MCF 10A (cell line): ENCODE measurements at regions of chr11 and their contacts with region 1.

Region 1: GRCh38 chr11:7571640-7572000 is 57.8 kb downstream of the PPFIBP2 start:
- DNase-seq: peak; percentile 83
- H3K4me3 Mint-ChIP-seq: no peak overlapping the region
- H3K27ac Mint-ChIP-seq: no peak overlapping the region
- H3K4me1 Mint-ChIP-seq: peaks cover 16% of the 10 kb centered on the region
- H3K27me3 Mint-ChIP-seq: no peaks in the 10 kb centered on the region
- CTCF ChIP-seq: peak; percentile 91

Region 2: DNA sequence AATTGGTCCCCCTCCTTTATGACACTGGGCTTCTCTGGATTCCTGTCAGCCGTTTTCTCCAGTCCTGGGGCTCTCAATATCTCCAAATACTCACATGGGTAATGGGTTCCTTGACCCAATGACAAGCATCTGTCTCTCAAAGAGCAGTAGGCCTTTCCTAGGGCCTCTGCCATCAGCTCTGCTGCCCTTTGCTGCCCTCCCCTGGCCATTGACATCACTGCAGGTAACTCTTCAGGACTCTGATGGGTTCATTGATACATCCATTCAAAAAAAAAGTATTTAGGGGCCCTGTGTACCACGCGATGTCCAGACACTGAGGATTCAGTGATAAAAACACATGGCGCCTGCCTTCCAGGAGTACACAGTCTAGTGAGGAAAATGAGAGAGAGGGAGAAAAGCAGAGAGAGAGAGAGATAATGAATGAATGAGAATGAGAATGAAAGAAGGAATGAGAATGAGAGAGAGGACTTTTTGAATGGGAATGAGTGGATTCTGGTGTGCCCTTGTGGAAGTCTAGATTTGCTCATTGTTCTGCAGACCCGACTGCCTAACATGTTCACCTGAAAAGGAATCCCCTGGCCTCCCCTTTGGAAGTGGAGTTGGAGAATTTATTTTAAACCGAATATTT is 128.9 kb before region 1 on chr11:
- CTCF ChIA-PET with region 1: interaction called, 13 read pairs
- POLR2A ChIA-PET with region 1: no interaction called
- intact Hi-C with region 1: no loop called
- DNase-seq: peak; percentile 70
- H3K4me3 Mint-ChIP-seq: no peak overlapping the region
- H3K27ac Mint-ChIP-seq: no peak overlapping the region
- H3K4me1 Mint-ChIP-seq: peaks cover 5% of the 10 kb centered on the region
- H3K27me3 Mint-ChIP-seq: no peaks in the 10 kb centered on the region
- CTCF ChIP-seq: peak; percentile 86

Region 3: DNA sequence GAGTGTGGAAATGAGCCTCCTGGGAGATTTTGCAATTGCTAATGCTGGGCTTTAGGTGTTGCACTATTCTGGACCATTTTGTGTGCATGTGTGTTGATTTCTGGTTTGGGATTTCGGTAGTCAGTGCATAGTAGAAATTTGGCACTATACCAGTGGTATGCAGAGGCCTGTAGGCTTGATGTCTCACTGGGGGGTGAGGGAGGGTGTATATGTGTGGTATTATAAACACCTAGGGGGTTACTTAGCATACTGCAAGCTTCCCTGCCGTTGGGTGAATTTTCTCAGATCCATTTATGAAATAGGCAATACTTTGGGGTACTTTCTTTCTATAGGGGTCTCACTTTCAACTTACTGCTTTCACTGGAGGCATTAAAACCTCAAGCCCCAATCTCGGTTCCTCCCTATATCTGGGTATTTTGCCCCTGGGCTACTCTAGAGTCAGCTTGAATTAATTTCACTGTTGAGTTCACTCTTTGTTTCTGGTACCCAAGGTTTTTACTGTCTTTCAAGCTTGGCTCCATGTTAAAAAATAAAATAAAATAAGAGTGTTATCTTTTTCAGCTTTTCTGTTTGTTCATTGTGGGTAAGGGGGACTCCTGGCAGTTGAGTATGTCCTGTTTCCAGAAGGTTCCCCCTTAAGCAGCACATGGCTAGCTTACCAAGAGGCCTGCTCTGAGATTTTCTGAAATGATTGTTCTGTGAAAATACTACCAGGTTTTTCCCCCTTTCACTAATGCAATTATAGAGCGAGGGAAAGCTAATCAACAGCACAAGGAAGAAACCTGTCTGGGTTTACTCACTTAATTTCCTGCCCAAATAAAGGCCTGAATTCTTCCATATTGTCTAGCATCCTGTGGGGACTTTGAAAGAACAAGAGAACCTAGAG is 12.0 kb before region 1 on chr11:
- CTCF ChIA-PET with region 1: interaction called, 57 read pairs
- POLR2A ChIA-PET with region 1: no interaction called
- intact Hi-C with region 1: no loop called
- DNase-seq: no peak
- H3K4me3 Mint-ChIP-seq: no peak overlapping the region
- H3K27ac Mint-ChIP-seq: no peak overlapping the region
- H3K4me1 Mint-ChIP-seq: peaks cover 5% of the 10 kb centered on the region
- H3K27me3 Mint-ChIP-seq: no peaks in the 10 kb centered on the region
- CTCF ChIP-seq: no peak

Region 4: GRCh38 chr11:7605186-7605943 is 33.7 kb after region 1 on chr11:
- CTCF ChIA-PET with region 1: interaction called, 43 read pairs
- POLR2A ChIA-PET with region 1: interaction called, 17 read pairs
- intact Hi-C with region 1: no loop called
- DNase-seq: no peak
- H3K4me3 Mint-ChIP-seq: no peak overlapping the region
- H3K27ac Mint-ChIP-seq: no peak overlapping the region
- H3K4me1 Mint-ChIP-seq: peaks cover 15% of the 10 kb centered on the region
- H3K27me3 Mint-ChIP-seq: no peaks in the 10 kb centered on the region
- CTCF ChIP-seq: no peak

Region 5: GRCh38 chr11:7637447-7638157 is 66.0 kb after region 1 on chr11:
- CTCF ChIA-PET with region 1: interaction called, 488 read pairs
- POLR2A ChIA-PET with region 1: interaction called, 3 read pairs
- intact Hi-C with region 1: no loop called
- DNase-seq: peak; percentile 67
- H3K4me3 Mint-ChIP-seq: no peak overlapping the region
- H3K27ac Mint-ChIP-seq: peak overlapping the region; percentile 62
- H3K4me1 Mint-ChIP-seq: peaks cover 11% of the 10 kb centered on the region
- H3K27me3 Mint-ChIP-seq: no peaks in the 10 kb centered on the region
- CTCF ChIP-seq: no peak

Region 6: GRCh38 chr11:7688238-7688826 is 116.7 kb after region 1 on chr11:
- CTCF ChIA-PET with region 1: interaction called, 33 read pairs
- POLR2A ChIA-PET with region 1: no interaction called
- intact Hi-C with region 1: loop called (anchors 1 kb)
- DNase-seq: peak; percentile 32
- H3K4me3 Mint-ChIP-seq: no peak overlapping the region
- H3K27ac Mint-ChIP-seq: no peak overlapping the region
- H3K4me1 Mint-ChIP-seq: peaks cover 13% of the 10 kb centered on the region
- H3K27me3 Mint-ChIP-seq: peaks cover 11% of the 10 kb centered on the region
- CTCF ChIP-seq: peak; percentile 62